Mammary epithelial cell (primary cell): ENCODE measurements at regions of chr12 and their contacts with region 1.

Region 1: DNA sequence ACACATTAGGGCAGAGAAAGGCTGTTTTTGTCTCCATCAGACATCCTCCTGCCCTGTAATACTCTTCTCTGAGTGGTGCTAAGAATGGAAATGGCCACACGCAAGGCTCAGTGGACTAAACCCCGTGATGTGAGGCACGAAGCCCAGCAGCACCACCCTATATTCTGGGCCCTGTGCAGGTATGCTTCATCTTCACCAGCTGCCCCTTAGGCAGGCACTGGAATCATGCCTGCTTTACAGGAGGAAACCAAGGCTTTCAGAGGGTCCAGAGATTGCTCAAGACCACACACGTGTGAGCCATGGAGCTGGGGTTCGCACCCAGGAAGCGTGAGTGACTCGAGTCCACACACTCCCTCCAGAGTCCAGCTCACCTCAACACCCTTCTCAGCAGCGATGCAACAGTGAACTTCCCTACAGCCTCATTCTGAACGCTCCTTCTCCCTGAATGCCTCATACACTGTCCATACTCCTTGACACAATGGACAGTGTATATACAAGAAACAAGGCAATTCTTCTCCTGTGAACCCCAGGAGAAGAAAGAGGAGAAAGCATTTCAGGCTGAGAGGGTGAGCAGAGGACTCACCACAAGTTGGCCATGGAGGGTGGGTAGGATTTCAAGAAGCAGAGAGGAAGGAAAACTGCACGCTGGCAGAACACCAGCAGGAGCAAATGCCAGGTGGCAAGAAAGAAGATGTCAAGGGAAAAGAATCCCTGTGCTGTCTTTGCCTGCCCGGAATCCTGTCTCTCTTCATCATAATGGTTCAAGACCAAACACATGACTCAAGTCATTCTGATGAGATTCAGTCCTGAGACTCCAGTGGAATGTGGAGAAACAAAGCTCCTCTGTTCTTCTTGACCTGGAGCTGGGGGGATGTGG is 39.1 kb downstream of the NT5DC3 start:
- DNase-seq: peak; percentile 100
- H3K4me3 ChIP-seq: peak overlapping the region in 1 of 3 experiments; percentile 2
- H3K27ac ChIP-seq: peak overlapping the region; percentile 96
- H3K4me1 ChIP-seq: peaks cover 80% of the 10 kb centered on the region
- H3K27me3 ChIP-seq: no peaks in the 10 kb centered on the region
- CTCF ChIP-seq: no peak

Region 2: GRCh38 chr12:103821773-103822172 is 19.8 kb after region 1 on chr12:
- CTCF ChIA-PET with region 1: no interaction called
- dilution Hi-C with region 1: no loop called
- in situ Hi-C with region 1: no loop called
- intact Hi-C with region 1: loop called (anchors 1 kb)
- DNase-seq: no peak
- H3K4me3 ChIP-seq: no peak overlapping the region
- H3K27ac ChIP-seq: no peak overlapping the region
- H3K4me1 ChIP-seq: peaks cover 7% of the 10 kb centered on the region
- H3K27me3 ChIP-seq: no peaks in the 10 kb centered on the region
- CTCF ChIP-seq: no peak

Region 3: GRCh38 chr12:103840876-103841689 is 39.1 kb after region 1 on chr12 and contains the start of gene NT5DC3:
- CTCF ChIA-PET with region 1: no interaction called
- dilution Hi-C with region 1: no loop called
- in situ Hi-C with region 1: no loop called
- intact Hi-C with region 1: loop called (anchors 1 kb)
- DNase-seq: peak; percentile 85
- H3K4me3 ChIP-seq: peak within 1 kb of the TSS; percentile 71 to 87 (median 84)
- H3K27ac ChIP-seq: peak within 1 kb of the TSS; percentile 95
- H3K4me1 ChIP-seq: peaks cover 16% of the 10 kb centered on the region
- H3K27me3 ChIP-seq: no peaks in the 10 kb centered on the region
- CTCF ChIP-seq: no peak
- total RNA-seq, gene NT5DC3: 46.4 to 98.5 TPM

Region 4: DNA sequence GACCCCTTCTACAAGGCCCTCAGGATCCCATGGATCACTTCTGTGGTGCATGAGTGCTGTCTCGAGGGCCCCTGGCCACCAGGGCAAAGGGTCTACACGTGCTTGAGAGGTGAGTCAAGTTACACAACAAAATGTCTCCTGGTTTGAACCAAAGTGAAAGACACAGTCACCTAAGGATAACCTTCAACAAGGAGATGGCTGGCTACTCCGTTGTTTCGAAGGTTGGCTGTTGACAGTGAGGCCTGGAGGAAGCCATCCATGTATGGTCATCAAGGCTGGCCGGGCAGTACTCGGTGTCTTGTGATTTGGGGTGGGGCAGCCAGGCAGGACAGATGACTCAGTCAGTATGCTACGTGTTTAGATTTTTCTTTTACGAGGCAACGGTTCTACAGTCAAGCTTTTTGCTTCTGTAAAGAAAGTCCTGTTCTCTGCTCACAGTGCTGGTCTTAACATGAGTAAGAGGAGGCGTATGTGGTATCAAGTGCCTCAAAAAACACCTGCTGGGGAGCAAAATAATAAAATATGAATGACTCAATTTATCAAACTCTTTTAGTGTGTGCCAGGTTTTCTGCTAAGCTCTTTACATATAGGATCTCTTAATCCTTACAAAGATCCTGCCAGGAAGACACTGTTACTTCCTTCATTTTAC is 57.1 kb after region 1 on chr12:
- CTCF ChIA-PET with region 1: no interaction called
- dilution Hi-C with region 1: no loop called
- in situ Hi-C with region 1: no loop called
- intact Hi-C with region 1: loop called (anchors 1 kb)
- DNase-seq: peak; percentile 99
- H3K4me3 ChIP-seq: no peak overlapping the region
- H3K27ac ChIP-seq: peak overlapping the region; percentile 95
- H3K4me1 ChIP-seq: peaks cover 27% of the 10 kb centered on the region
- H3K27me3 ChIP-seq: no peaks in the 10 kb centered on the region
- CTCF ChIP-seq: no peak